Endothelial cell of umbilical vein (primary cell): ENCODE measurements at regions of chr2 and their contacts with region 1.

Region 1: DNA sequence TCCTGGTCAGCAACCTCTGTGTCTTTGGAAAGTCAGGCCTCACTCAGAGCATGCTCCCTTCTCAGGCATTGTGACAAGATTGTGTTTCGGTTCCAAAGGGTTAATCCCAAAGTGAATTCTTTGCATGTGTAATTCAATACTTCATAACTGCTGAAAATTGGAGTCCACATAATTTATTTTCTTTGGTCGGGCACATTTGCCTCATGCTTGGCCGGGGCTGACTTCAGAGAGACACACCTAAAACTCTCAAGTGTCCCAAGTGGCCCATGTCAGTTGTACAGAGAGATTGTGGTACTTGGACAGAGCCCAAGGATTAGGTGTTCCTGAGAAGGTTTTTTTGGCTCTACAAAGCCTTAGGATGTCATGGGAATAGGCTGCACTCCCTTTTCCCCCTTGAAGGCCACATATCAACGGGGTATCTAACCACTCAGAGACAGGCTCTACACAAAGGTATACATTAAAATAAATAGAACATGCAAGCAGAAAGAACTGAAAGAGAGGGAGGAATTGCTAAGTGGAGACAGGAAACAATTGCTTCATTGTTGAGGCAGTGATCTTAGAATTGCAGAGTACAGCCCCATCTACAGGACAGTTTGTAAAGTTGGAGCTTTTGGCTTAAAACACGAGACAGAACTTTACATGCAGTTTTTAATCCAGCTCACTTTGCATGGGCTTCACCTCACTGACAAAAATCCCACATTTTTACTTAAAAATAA is 1232.3 kb upstream of the ZEB2 start:
- DNase-seq: peak; percentile 85
- H3K4me3 ChIP-seq: no peak overlapping the region
- H3K27ac ChIP-seq: peak overlapping the region; percentile 41
- H3K4me1 ChIP-seq: peaks cover 25% of the 10 kb centered on the region
- H3K27me3 ChIP-seq: no peaks in the 10 kb centered on the region
- CTCF ChIP-seq: peak; percentile 64 to 66
- POLR2A ChIP-seq: no peak

Region 2: DNA sequence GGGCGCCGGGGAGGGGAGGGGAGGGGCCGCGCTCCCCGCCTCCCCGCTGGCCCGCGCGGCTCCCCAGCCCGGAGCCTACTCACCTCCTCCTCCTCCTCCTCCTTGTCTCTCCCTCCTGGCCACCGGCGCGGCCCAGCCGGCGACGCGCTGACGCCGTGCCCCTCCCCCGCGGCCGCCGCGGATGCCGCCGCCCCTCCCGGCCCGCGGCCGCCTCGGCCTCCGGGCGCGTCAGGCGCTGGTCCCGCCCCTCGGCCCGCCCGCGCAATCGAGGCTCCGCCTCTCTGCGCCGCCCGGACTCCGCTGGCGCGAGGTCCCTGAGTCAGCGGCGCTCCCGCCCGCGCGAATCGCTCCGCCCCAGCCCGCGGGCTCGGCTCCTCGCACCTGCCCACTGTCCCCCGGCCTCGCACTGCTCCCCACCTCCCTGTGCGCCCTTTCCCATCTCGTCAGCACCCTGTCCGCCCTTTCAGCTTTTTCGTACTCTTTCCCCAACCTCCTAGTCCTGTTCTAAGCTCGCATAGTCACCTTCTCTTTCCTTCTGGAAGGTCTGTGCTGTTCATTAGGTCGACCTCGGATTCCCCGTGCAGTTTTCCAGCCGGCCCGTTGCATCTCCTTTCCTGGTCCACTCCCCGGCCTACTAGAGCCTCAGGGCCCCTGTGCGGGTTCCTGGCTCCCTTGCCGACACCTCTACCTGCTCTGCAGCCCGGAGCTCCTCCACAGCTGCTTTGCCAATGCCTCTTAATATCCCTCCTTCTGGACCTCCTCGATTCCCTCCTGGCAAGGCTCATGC is 1419.7 kb before region 1 on chr2:
- CTCF ChIA-PET with region 1: interaction called, 5 read pairs
- POLR2A ChIA-PET with region 1: no interaction called
- dilution Hi-C with region 1: no loop called
- intact Hi-C with region 1: loop called (anchors 5 kb)
- DNase-seq: peak; percentile 88
- H3K4me3 ChIP-seq: peak overlapping the region; percentile 49 to 71 (median 60)
- H3K27ac ChIP-seq: peak overlapping the region; percentile 85
- H3K4me1 ChIP-seq: peaks cover 15% of the 10 kb centered on the region
- H3K27me3 ChIP-seq: no peaks in the 10 kb centered on the region
- CTCF ChIP-seq: no peak
- POLR2A ChIP-seq: peak; percentile 79

Region 3: GRCh38 chr2:144596073-144596871 is 1156.0 kb before region 1 on chr2:
- CTCF ChIA-PET with region 1: no interaction called
- POLR2A ChIA-PET with region 1: no interaction called
- dilution Hi-C with region 1: no loop called
- intact Hi-C with region 1: loop called (anchors 5 kb)
- DNase-seq: peak; percentile 89
- H3K4me3 ChIP-seq: no peak overlapping the region
- H3K27ac ChIP-seq: peak overlapping the region; percentile 71
- H3K4me1 ChIP-seq: peaks cover 38% of the 10 kb centered on the region
- H3K27me3 ChIP-seq: no peaks in the 10 kb centered on the region
- CTCF ChIP-seq: no peak
- POLR2A ChIP-seq: no peak

Region 4: GRCh38 chr2:145119225-145119624 is 633.0 kb before region 1 on chr2:
- CTCF ChIA-PET with region 1: no interaction called
- POLR2A ChIA-PET with region 1: no interaction called
- dilution Hi-C with region 1: no loop called
- intact Hi-C with region 1: loop called (anchors 10 kb)
- DNase-seq: no peak
- H3K4me3 ChIP-seq: no peak overlapping the region
- H3K27ac ChIP-seq: no peak overlapping the region
- H3K4me1 ChIP-seq: no peaks in the 10 kb centered on the region
- H3K27me3 ChIP-seq: no peaks in the 10 kb centered on the region
- CTCF ChIP-seq: no peak
- POLR2A ChIP-seq: no peak

Region 5: DNA sequence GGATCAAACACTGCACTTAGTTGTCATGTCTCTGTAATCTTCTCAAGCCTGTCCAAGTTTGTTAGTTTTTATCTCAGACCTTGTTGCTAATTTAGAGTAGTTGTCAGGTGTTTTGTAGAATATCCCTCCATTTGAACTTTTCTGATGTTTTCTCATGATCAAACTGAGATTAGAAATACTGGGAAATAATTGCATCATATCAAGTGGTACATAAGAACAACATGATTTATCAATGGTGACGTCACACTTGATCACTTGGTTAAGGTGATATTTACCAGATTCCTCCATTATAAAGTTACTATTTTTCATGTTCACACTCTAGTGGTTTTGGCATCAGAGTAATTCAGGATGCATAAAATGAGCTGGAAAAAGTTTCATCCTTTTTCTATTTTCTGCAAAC is 49.9 kb before region 1 on chr2:
- CTCF ChIA-PET with region 1: no interaction called
- POLR2A ChIA-PET with region 1: no interaction called
- dilution Hi-C with region 1: no loop called
- intact Hi-C with region 1: no loop called
- DNase-seq: no peak
- H3K4me3 ChIP-seq: no peak overlapping the region
- H3K27ac ChIP-seq: no peak overlapping the region
- H3K4me1 ChIP-seq: no peaks in the 10 kb centered on the region
- H3K27me3 ChIP-seq: no peaks in the 10 kb centered on the region
- CTCF ChIP-seq: no peak
- POLR2A ChIP-seq: no peak

Region 6: GRCh38 chr2:145724311-145724898 is 27.8 kb before region 1 on chr2:
- CTCF ChIA-PET with region 1: interaction called, 14 read pairs
- POLR2A ChIA-PET with region 1: no interaction called
- dilution Hi-C with region 1: no loop called
- intact Hi-C with region 1: no loop called
- DNase-seq: no peak
- H3K4me3 ChIP-seq: peak overlapping the region in 1 of 3 experiments; percentile 13
- H3K27ac ChIP-seq: no peak overlapping the region
- H3K4me1 ChIP-seq: peaks cover 10% of the 10 kb centered on the region
- H3K27me3 ChIP-seq: no peaks in the 10 kb centered on the region
- CTCF ChIP-seq: no peak
- POLR2A ChIP-seq: no peak

Region 7: GRCh38 chr2:146079216-146079615 is 327.0 kb after region 1 on chr2:
- CTCF ChIA-PET with region 1: no interaction called
- POLR2A ChIA-PET with region 1: no interaction called
- dilution Hi-C with region 1: no loop called
- intact Hi-C with region 1: no loop called
- DNase-seq: no peak
- H3K4me3 ChIP-seq: no peak overlapping the region
- H3K27ac ChIP-seq: no peak overlapping the region
- H3K4me1 ChIP-seq: no peaks in the 10 kb centered on the region
- H3K27me3 ChIP-seq: no peaks in the 10 kb centered on the region
- CTCF ChIP-seq: no peak
- POLR2A ChIP-seq: no peak

Region 8: DNA sequence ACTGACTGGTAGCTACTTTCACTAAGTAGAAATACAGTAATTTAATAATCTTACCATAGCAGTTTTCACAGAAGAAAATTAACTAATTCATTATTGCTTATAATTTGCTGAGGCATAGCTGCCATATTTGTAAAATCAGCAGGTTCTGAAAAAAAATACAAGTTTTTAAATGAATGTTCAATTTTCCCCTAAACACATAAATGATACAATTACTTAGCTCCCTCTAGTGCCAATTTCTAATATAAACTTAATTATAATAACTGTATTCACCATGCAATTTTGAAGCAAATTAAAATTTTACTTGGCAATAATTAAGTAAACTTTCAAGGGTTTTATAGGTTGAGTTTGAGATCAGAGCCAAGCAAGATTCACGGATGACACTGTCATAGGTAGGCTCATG is 770.9 kb after region 1 on chr2:
- CTCF ChIA-PET with region 1: interaction called, 15 read pairs
- POLR2A ChIA-PET with region 1: no interaction called
- dilution Hi-C with region 1: no loop called
- intact Hi-C with region 1: no loop called
- DNase-seq: peak; percentile 16
- H3K4me3 ChIP-seq: no peak overlapping the region
- H3K27ac ChIP-seq: no peak overlapping the region
- H3K4me1 ChIP-seq: no peaks in the 10 kb centered on the region
- H3K27me3 ChIP-seq: no peaks in the 10 kb centered on the region
- CTCF ChIP-seq: no peak
- POLR2A ChIP-seq: no peak